Naive thymus-derived CD4-positive, alpha-beta T cell (primary cell): ENCODE measurements at regions of chr18 and their contacts with region 1.

Region 1: DNA sequence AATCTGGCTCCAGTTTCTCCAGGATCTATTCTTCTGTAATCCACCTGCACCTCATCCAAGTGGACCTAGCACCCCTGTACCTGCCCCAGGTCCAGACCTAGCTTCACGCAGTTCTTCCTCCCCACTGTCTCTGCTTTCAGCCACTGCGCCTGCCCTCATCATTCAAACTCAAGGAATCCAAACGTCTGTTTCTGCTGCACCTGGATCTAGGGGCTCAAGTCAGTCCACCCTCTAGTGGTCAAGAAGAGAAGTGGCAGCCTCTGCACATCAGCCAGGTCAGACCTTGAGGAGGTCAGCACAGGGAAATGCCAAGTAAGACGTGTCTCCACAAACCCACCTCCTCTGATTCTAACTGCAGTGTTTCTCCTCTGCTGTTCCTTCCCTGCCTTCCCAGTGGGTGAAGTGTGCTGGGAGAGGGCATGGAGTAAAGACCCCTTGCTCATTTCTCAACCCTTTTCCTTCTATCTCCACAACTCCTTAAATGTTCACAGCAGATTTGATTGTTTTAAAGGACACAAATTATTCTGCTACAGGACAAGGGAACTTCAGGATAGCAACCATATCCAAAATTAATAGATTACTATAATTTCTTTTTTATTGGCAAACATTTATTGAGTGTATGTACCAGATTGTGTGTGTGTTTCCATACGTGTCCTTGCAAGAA is 8.6 kb upstream of the RNF152 start:
- DNase-seq: peak in 7 of 9 donors; percentile 13 to 50 (median 28)
- ATAC-seq: peak; percentile 92
- H3K4me3 ChIP-seq: no peak overlapping the region
- H3K4me3 Mint-ChIP-seq: no peak overlapping the region
- H3K27ac ChIP-seq: no peak overlapping the region
- H3K27ac Mint-ChIP-seq: no peak overlapping the region
- H3K4me1 ChIP-seq: no peaks in the 10 kb centered on the region
- H3K4me1 Mint-ChIP-seq: peaks cover 0 to 4% (median 0%) of the 10 kb centered on the region in 7 donors
- H3K27me3 ChIP-seq: no peaks in the 10 kb centered on the region
- H3K27me3 Mint-ChIP-seq: peaks cover 23 to 50% (median 43%) of the 10 kb centered on the region in 5 donors

Region 2: DNA sequence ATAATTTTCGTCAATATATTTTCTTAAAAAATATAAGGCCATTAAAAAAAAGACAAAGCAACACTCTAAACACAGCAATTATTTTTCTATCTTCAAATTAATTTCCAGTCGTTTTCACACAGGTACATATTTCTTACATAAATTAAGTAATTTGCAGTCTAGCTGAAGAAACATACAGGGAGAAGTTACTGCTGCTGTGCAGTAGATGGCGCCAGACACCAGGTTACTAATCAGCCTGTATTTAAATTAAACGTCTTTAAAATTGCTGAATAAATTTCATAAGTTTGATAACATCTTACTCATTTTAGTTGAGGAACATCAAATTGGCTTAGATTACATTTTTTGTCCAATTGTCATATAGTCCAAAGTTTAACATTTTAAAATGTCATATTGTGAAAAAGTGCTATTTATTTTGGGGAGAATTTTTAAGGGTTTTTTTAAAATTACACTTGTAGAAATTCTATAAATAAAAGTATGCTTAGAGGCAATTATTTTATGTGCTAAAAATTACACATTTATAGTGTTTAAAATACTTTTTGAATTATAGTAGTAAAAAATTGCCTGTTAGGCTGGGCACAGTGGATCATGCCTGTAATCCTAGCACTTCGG is 1913.3 kb before region 1 on chr18:
- CTCF ChIA-PET with region 1: no interaction called
- POLR2A ChIA-PET with region 1: no interaction called
- intact Hi-C with region 1: loop called in 1 of 2 experiments (anchors 1 kb)
- DNase-seq: peak in 5 of 9 donors; percentile 19 to 37 (median 24)
- ATAC-seq: peak; percentile 54
- H3K4me3 ChIP-seq: no peak overlapping the region
- H3K4me3 Mint-ChIP-seq: no peak overlapping the region
- H3K27ac ChIP-seq: no peak overlapping the region
- H3K27ac Mint-ChIP-seq: no peak overlapping the region
- H3K4me1 ChIP-seq: no peaks in the 10 kb centered on the region
- H3K4me1 Mint-ChIP-seq: peaks cover 0 to 2% (median 0%) of the 10 kb centered on the region in 7 donors
- H3K27me3 ChIP-seq: no peaks in the 10 kb centered on the region
- H3K27me3 Mint-ChIP-seq: peaks cover 24 to 28% (median 27%) of the 10 kb centered on the region in 5 donors

Region 3: GRCh38 chr18:61551586-61551985 is 349.9 kb before region 1 on chr18:
- CTCF ChIA-PET with region 1: no interaction called
- POLR2A ChIA-PET with region 1: no interaction called
- intact Hi-C with region 1: loop called in 1 of 2 experiments (anchors 2 kb)
- DNase-seq: peak in 5 of 9 donors; percentile 8 to 25 (median 23)
- ATAC-seq: no peak
- H3K4me3 ChIP-seq: no peak overlapping the region
- H3K4me3 Mint-ChIP-seq: no peak overlapping the region
- H3K27ac ChIP-seq: no peak overlapping the region
- H3K27ac Mint-ChIP-seq: no peak overlapping the region
- H3K4me1 ChIP-seq: no peaks in the 10 kb centered on the region
- H3K4me1 Mint-ChIP-seq: peaks cover 0 to 31% (median 2%) of the 10 kb centered on the region in 7 donors
- H3K27me3 ChIP-seq: no peaks in the 10 kb centered on the region
- H3K27me3 Mint-ChIP-seq: peaks cover 0 to 16% (median 5%) of the 10 kb centered on the region in 5 donors

Region 4: GRCh38 chr18:61581578-61582201 is 319.8 kb before region 1 on chr18:
- CTCF ChIA-PET with region 1: no interaction called
- POLR2A ChIA-PET with region 1: no interaction called
- intact Hi-C with region 1: loop called in 1 of 2 experiments (anchors 1 kb)
- DNase-seq: peak; percentile 30 to 71 (median 58)
- ATAC-seq: peak; percentile 81
- H3K4me3 ChIP-seq: no peak overlapping the region
- H3K4me3 Mint-ChIP-seq: peak overlapping the region in 6 of 10 donors; percentile 16 to 70 (median 44)
- H3K27ac ChIP-seq: no peak overlapping the region
- H3K27ac Mint-ChIP-seq: peak overlapping the region in 2 of 9 donors; percentile 38 to 81
- H3K4me1 ChIP-seq: peaks cover 0 to 5% of the 10 kb centered on the region in 2 donors
- H3K4me1 Mint-ChIP-seq: peaks cover 5 to 12% (median 9%) of the 10 kb centered on the region in 7 donors
- H3K27me3 ChIP-seq: peaks cover 0 to 6% of the 10 kb centered on the region in 2 donors
- H3K27me3 Mint-ChIP-seq: peaks cover 40 to 76% (median 56%) of the 10 kb centered on the region in 5 donors

Region 5: DNA sequence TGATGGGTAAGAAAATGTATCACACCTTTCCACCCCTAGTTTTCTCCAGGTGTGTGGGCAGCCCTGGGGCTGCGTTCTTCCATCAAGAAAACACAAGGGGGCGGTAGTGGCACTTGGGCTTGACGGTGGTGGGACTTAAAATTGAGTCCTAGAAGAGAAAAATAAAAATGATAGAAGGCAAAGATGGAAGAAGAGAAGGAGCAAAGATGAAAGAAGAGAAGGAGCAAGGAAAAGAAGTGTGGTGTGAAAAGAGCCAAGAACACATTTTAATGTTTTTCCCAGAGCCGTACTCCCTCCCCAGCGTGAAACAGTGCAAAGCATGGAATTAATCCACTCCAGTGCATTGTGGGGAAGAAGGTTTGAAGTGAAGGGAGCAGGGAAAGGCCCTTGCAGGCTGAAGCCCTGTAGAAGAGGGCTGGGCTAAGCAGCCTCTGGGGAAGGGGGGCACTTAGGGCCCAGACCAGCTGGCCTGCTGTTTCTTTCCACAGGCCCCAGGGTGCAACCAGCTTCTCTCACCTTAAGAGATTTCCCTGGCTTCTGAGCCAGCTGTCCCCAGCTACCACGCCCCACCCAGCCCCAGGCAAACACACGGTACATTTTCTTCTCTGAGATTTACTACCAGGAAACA is 265.4 kb before region 1 on chr18:
- CTCF ChIA-PET with region 1: no interaction called
- POLR2A ChIA-PET with region 1: no interaction called
- intact Hi-C with region 1: loop called in 1 of 2 experiments (anchors 1 kb)
- DNase-seq: peak in 6 of 9 donors; percentile 18 to 38 (median 31)
- ATAC-seq: peak; percentile 45
- H3K4me3 ChIP-seq: no peak overlapping the region
- H3K4me3 Mint-ChIP-seq: no peak overlapping the region
- H3K27ac ChIP-seq: no peak overlapping the region
- H3K27ac Mint-ChIP-seq: no peak overlapping the region
- H3K4me1 ChIP-seq: no peaks in the 10 kb centered on the region
- H3K4me1 Mint-ChIP-seq: peaks cover 0 to 4% (median 0%) of the 10 kb centered on the region in 7 donors
- H3K27me3 ChIP-seq: no peaks in the 10 kb centered on the region
- H3K27me3 Mint-ChIP-seq: peaks cover 3 to 18% (median 12%) of the 10 kb centered on the region in 5 donors

Region 6: GRCh38 chr18:61833387-61833786 is 68.1 kb before region 1 on chr18:
- CTCF ChIA-PET with region 1: no interaction called
- POLR2A ChIA-PET with region 1: no interaction called
- intact Hi-C with region 1: no loop called
- DNase-seq: peak in 4 of 9 donors; percentile 0 to 19 (median 9)
- ATAC-seq: peak; percentile 49
- H3K4me3 ChIP-seq: no peak overlapping the region
- H3K4me3 Mint-ChIP-seq: peak overlapping the region in 9 of 10 donors; percentile 2 to 80 (median 64)
- H3K27ac ChIP-seq: no peak overlapping the region
- H3K27ac Mint-ChIP-seq: peak overlapping the region in 3 of 9 donors; percentile 29 to 49 (median 47)
- H3K4me1 ChIP-seq: peaks cover 6 to 18% of the 10 kb centered on the region in 2 donors
- H3K4me1 Mint-ChIP-seq: peaks cover 15 to 25% (median 19%) of the 10 kb centered on the region in 7 donors
- H3K27me3 ChIP-seq: no peaks in the 10 kb centered on the region
- H3K27me3 Mint-ChIP-seq: peaks cover 0 to 31% (median 4%) of the 10 kb centered on the region in 5 donors

Region 7: DNA sequence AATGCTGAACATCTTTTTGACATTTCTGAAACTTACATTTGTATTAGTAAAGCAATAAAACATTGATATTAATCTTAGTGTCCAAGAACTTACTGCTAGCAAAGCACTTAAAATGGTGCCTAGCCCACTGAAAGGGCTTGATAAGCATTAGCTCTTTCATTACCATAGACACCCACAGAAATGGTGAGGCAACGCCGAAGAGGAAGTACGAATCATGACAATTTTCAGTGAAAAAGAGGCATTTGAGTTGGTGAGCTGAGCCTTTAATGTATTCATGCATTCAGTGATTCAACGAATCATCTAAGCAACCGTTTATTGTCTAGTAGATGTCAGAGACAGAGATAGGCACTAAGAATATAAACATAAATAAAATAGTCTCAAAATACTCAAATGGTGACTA is 184.3 kb after region 1 on chr18:
- CTCF ChIA-PET with region 1: no interaction called
- POLR2A ChIA-PET with region 1: no interaction called
- intact Hi-C with region 1: no loop called
- DNase-seq: no peak
- ATAC-seq: no peak
- H3K4me3 ChIP-seq: no peak overlapping the region
- H3K4me3 Mint-ChIP-seq: peak overlapping the region in 2 of 10 donors; percentile 27 to 67
- H3K27ac ChIP-seq: no peak overlapping the region
- H3K27ac Mint-ChIP-seq: peak overlapping the region in 3 of 9 donors; percentile 14 to 44 (median 38)
- H3K4me1 ChIP-seq: peaks cover 0 to 18% of the 10 kb centered on the region in 2 donors
- H3K4me1 Mint-ChIP-seq: peaks cover 13 to 41% (median 36%) of the 10 kb centered on the region in 7 donors
- H3K27me3 ChIP-seq: no peaks in the 10 kb centered on the region
- H3K27me3 Mint-ChIP-seq: no peaks in the 10 kb centered on the region

Region 8: GRCh38 chr18:62131301-62131909 is 229.9 kb after region 1 on chr18:
- CTCF ChIA-PET with region 1: interaction called, 5 read pairs
- POLR2A ChIA-PET with region 1: no interaction called
- intact Hi-C with region 1: loop called (anchors 1 kb)
- DNase-seq: peak; percentile 11 to 73 (median 57)
- ATAC-seq: peak; percentile 71
- H3K4me3 ChIP-seq: no peak overlapping the region
- H3K4me3 Mint-ChIP-seq: no peak overlapping the region
- H3K27ac ChIP-seq: no peak overlapping the region
- H3K27ac Mint-ChIP-seq: no peak overlapping the region
- H3K4me1 ChIP-seq: no peaks in the 10 kb centered on the region
- H3K4me1 Mint-ChIP-seq: peaks cover 0 to 5% (median 0%) of the 10 kb centered on the region in 7 donors
- H3K27me3 ChIP-seq: no peaks in the 10 kb centered on the region
- H3K27me3 Mint-ChIP-seq: no peaks in the 10 kb centered on the region

Region 9: GRCh38 chr18:62368100-62368499 is 466.6 kb after region 1 on chr18:
- CTCF ChIA-PET with region 1: no interaction called
- POLR2A ChIA-PET with region 1: no interaction called
- intact Hi-C with region 1: no loop called
- DNase-seq: no peak
- ATAC-seq: no peak
- H3K4me3 ChIP-seq: no peak overlapping the region
- H3K4me3 Mint-ChIP-seq: peak overlapping the region in 1 of 10 donors; percentile 36
- H3K27ac ChIP-seq: no peak overlapping the region
- H3K27ac Mint-ChIP-seq: peak overlapping the region in 1 of 9 donors; percentile 83
- H3K4me1 ChIP-seq: no peaks in the 10 kb centered on the region
- H3K4me1 Mint-ChIP-seq: peaks cover 0 to 46% (median 3%) of the 10 kb centered on the region in 7 donors
- H3K27me3 ChIP-seq: no peaks in the 10 kb centered on the region
- H3K27me3 Mint-ChIP-seq: peaks cover 0 to 3% (median 0%) of the 10 kb centered on the region in 5 donors

Region 10: DNA sequence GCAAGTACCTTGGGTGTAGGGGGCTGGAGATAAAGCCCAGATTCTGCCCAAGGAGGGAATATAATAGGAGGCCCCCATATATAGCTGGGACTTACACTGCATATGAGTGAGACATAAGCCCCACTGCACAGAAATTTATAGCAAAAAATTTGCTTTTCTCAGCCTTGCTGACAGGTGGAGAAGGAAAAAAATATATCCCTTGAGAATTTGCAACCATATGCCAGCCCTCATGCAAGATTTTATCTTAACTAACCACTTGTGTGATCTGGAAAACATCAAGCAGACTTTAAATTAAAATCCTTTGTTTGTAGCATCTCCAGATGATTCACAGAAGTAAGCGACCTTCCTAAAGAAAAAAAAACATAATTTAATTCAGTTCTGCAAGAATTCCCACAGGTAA is 1129.9 kb after region 1 on chr18:
- CTCF ChIA-PET with region 1: no interaction called
- POLR2A ChIA-PET with region 1: no interaction called
- intact Hi-C with region 1: no loop called
- DNase-seq: no peak
- ATAC-seq: no peak
- H3K4me3 ChIP-seq: no peak overlapping the region
- H3K4me3 Mint-ChIP-seq: no peak overlapping the region
- H3K27ac ChIP-seq: no peak overlapping the region
- H3K27ac Mint-ChIP-seq: no peak overlapping the region
- H3K4me1 ChIP-seq: no peaks in the 10 kb centered on the region
- H3K4me1 Mint-ChIP-seq: peaks cover 0 to 2% (median 0%) of the 10 kb centered on the region in 7 donors
- H3K27me3 ChIP-seq: no peaks in the 10 kb centered on the region
- H3K27me3 Mint-ChIP-seq: peaks cover 0 to 12% (median 3%) of the 10 kb centered on the region in 5 donors